Activated CD8-positive, alpha-beta T cell treated with anti-CD3 and anti-CD28 coated beads, Interleukin-2, amount 10 ng/mL, durations not matched to agents 7 days and 5 days (primary cell): ENCODE measurements at regions of chr7 and their contacts with region 1.

Region 1: GRCh38 chr7:25093268-25093826 is 31.7 kb downstream of the CYCS start:
- DNase-seq: peak; percentile 86
- ATAC-seq: peak; percentile 87
- H3K4me3 Mint-ChIP-seq: no peak overlapping the region
- H3K27ac Mint-ChIP-seq: no peak overlapping the region
- H3K4me1 Mint-ChIP-seq: peaks cover 7% of the 10 kb centered on the region
- H3K27me3 Mint-ChIP-seq: peaks cover 13% of the 10 kb centered on the region

Region 2: GRCh38 chr7:24665564-24666294 is 427.6 kb before region 1 on chr7:
- CTCF ChIA-PET with region 1: interaction called, 10 read pairs
- POLR2A ChIA-PET with region 1: no interaction called
- DNase-seq: peak; percentile 62
- ATAC-seq: no peak
- H3K4me3 Mint-ChIP-seq: no peak overlapping the region
- H3K27ac Mint-ChIP-seq: no peak overlapping the region
- H3K4me1 Mint-ChIP-seq: no peaks in the 10 kb centered on the region
- H3K27me3 Mint-ChIP-seq: no peaks in the 10 kb centered on the region

Region 3: DNA sequence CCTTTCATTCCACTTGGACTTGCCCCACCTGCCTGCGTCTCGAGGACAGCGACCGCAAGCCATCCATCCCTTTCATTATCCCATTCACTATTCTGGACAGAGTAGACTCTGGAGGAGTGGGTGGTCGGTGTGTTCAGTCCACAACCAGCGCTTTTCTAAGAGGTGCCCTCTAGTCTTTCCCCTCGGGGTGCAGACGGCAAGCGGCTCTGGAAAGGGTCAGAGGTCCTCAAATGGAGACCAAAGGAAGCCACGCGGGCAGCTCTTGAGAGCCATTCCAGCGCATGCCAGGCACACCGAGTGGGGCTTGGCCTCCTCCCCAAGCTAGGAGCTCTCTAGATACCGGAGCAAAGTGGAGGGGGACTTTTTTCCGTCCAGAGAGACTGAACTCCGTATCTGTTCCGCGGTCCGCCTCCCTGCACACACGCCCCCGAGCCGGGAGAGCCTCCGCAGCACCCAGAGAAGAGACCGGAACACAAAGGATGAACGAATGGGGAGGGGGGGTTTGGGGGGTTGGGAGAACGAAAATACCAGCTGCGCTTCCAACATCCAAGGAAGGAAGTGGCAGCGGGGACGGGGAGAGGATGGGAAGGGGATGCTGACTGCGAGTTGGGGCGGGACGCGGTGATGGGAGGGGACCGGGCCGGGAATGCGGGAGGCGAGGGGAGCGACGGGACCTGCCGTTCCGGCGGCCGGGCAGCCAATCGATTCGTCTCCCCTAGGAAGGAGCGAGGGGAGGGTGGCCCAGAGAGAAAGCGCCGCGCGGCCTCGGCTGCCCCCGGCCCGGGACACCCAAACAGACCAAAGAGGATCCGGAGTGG is 336.6 kb before region 1 on chr7:
- CTCF ChIA-PET with region 1: interaction called, 17 read pairs
- POLR2A ChIA-PET with region 1: no interaction called
- DNase-seq: peak; percentile 33
- ATAC-seq: peak; percentile 32
- H3K4me3 Mint-ChIP-seq: peak overlapping the region; percentile 81
- H3K27ac Mint-ChIP-seq: peak overlapping the region; percentile 67
- H3K4me1 Mint-ChIP-seq: peaks cover 30% of the 10 kb centered on the region
- H3K27me3 Mint-ChIP-seq: peaks cover 57% of the 10 kb centered on the region

Region 4: GRCh38 chr7:24979863-24980533 is 113.3 kb before region 1 on chr7 and contains the start of gene OSBPL3:
- CTCF ChIA-PET with region 1: interaction called, 62 read pairs
- POLR2A ChIA-PET with region 1: interaction called, 3 read pairs
- DNase-seq: peak; percentile 97
- ATAC-seq: peak; percentile 79
- H3K4me3 Mint-ChIP-seq: peak within 1 kb of the TSS; percentile 95
- H3K27ac Mint-ChIP-seq: peak within 1 kb of the TSS; percentile 97
- H3K4me1 Mint-ChIP-seq: peaks cover 69% of the 10 kb centered on the region
- H3K27me3 Mint-ChIP-seq: peaks cover 7% of the 10 kb centered on the region
- total RNA-seq, gene OSBPL3: 73.0 to 83.0 TPM

Region 5: GRCh38 chr7:25028370-25029021 is 64.9 kb before region 1 on chr7:
- CTCF ChIA-PET with region 1: interaction called, 22 read pairs
- POLR2A ChIA-PET with region 1: no interaction called
- DNase-seq: peak; percentile 32
- ATAC-seq: peak; percentile 84
- H3K4me3 Mint-ChIP-seq: peak overlapping the region; percentile 2
- H3K27ac Mint-ChIP-seq: peak overlapping the region; percentile 90
- H3K4me1 Mint-ChIP-seq: peaks cover 36% of the 10 kb centered on the region
- H3K27me3 Mint-ChIP-seq: peaks cover 13% of the 10 kb centered on the region

Region 6: GRCh38 chr7:25069900-25070443 is 23.4 kb before region 1 on chr7:
- CTCF ChIA-PET with region 1: interaction called, 24 read pairs
- POLR2A ChIA-PET with region 1: no interaction called
- DNase-seq: peak; percentile 71
- ATAC-seq: peak; percentile 76
- H3K4me3 Mint-ChIP-seq: no peak overlapping the region
- H3K27ac Mint-ChIP-seq: no peak overlapping the region
- H3K4me1 Mint-ChIP-seq: peaks cover 11% of the 10 kb centered on the region
- H3K27me3 Mint-ChIP-seq: peaks cover 9% of the 10 kb centered on the region

Region 7: DNA sequence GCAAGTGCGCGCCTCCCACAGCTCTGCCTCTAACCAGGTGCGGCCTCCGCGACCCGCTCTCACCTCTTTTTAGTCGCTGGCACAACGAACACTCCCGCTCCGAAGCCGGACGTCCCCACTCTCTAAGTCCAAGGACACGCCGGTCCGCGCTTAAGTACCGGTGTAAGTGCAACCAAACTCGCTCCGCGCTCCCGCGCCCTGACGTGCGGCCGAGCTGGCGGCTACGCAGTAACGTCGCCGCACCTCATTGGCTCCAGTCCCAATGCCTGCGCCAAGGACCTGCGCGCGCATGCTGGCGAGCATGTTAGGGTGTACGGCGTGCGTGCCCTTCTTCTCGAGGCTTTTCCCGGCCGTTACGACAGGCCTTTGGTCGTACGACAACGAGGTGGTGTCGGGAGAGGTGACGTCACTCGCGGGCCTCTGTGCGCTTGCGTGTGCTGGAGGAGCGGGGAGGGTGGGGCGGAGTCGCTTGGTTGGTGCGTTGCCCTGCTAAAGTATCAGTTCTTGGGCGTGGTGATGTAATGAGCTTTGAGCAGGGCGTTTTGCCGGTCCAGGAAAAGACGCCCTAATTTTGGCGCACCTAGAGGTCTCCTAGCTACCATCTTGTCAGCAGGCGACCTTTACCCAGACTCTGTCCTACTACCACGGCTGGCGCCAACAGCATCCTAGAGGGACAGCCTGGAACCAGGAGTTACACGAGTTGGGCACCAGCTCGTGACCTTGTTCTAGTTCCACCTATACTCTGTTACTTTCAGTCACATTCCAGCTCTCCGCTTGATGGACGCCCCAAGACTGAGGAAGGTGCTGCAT is 32.0 kb after region 1 on chr7 and contains the start of gene CYCS:
- CTCF ChIA-PET with region 1: interaction called, 21 read pairs
- POLR2A ChIA-PET with region 1: no interaction called
- DNase-seq: peak; percentile 100
- ATAC-seq: peak; percentile 95
- H3K4me3 Mint-ChIP-seq: peak within 1 kb of the TSS; percentile 86
- H3K27ac Mint-ChIP-seq: peak within 1 kb of the TSS; percentile 95
- H3K4me1 Mint-ChIP-seq: peaks cover 38% of the 10 kb centered on the region
- H3K27me3 Mint-ChIP-seq: no peaks in the 10 kb centered on the region
- total RNA-seq, gene CYCS: 153 to 157 TPM